Gastrocnemius medialis (tissue), 4 donors: ENCODE measurements at regions of chr13 and their contacts with region 1.

Region 1: DNA sequence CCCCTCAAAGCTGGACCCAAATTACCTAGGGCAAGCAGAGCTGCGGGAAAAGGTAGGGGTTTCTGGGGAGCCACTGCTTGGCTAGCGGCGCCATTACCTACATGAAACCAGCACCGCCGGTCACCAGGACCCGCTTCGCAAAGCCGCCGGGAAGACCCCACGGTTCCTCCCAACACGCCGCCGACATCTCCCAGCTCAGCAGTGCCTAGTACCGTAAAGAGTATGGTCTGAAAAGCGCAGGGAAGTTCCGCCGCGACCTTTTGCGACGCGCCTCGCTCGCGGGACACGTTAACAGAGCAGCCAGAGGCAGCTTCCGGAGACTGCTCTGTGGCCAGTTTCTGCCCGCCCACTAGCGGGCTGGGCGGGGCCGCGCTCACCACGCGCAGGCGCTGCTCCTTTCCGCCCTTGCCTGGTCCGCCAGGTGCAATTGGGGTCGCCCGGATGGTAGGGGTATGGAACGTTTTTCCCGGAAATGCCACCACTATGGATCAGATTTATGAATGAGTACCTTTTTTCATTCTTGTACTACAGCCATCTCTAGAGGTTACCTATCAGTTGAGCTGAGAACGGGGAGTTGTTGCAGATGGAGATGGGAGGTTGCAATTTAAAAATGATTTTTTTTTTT is at the start of gene TGDS:
- DNase-seq: peak; percentile 74 to 91
- ATAC-seq: peak; percentile 99 to 100
- H3K4me3 ChIP-seq: peak within 1 kb of the TSS; percentile 69 to 91 (median 83)
- H3K27ac ChIP-seq: peak within 1 kb of the TSS; percentile 77 to 86 (median 78)
- H3K4me1 ChIP-seq: peaks cover 22 to 24% of the 10 kb centered on the region in 2 donors
- H3K27me3 ChIP-seq: no peaks in the 10 kb centered on the region
- CTCF ChIP-seq: peak in 2 of 5 experiments; percentile 39 to 42
- POLR2A ChIP-seq: peak; percentile 75 to 76
- total RNA-seq, gene TGDS: 2.9 to 6.0 (median 4.0) TPM

Region 2: GRCh38 chr13:94479616-94480015 is 116.4 kb before region 1 on chr13 and contains the start of gene DCT:
- in situ Hi-C with region 1: no loop called
- intact Hi-C with region 1: no loop called
- DNase-seq: no peak
- ATAC-seq: no peak
- H3K4me3 ChIP-seq: no peak within 1 kb of the TSS
- H3K27ac ChIP-seq: peak within 1 kb of the TSS in 2 of 4 donors; percentile 31 to 42
- H3K4me1 ChIP-seq: no peaks in the 10 kb centered on the region
- H3K27me3 ChIP-seq: no peaks in the 10 kb centered on the region
- CTCF ChIP-seq: no peak
- POLR2A ChIP-seq: no peak
- total RNA-seq, gene DCT: 0.10 to 0.71 (median 0.16) TPM in 3 of 4 donors, not detected in the other

Region 3: GRCh38 chr13:94549232-94550061 is 46.6 kb before region 1 on chr13:
- in situ Hi-C with region 1: no loop called
- intact Hi-C with region 1: loop called (anchors 2 kb)
- DNase-seq: peak; percentile 71 to 83
- ATAC-seq: peak; percentile 85 to 87
- H3K4me3 ChIP-seq: peak overlapping the region; percentile 70 to 81 (median 77)
- H3K27ac ChIP-seq: peak overlapping the region; percentile 78 to 94 (median 86)
- H3K4me1 ChIP-seq: peaks cover 8 to 12% of the 10 kb centered on the region in 2 donors
- H3K27me3 ChIP-seq: peaks cover 0 to 3% (median 0%) of the 10 kb centered on the region in 3 donors
- CTCF ChIP-seq: peak in 1 of 5 experiments; percentile 4
- POLR2A ChIP-seq: peak; percentile 24 to 40